ENCODE measurements at regions of chr14 and their contacts with region 1.

Region 1: DNA sequence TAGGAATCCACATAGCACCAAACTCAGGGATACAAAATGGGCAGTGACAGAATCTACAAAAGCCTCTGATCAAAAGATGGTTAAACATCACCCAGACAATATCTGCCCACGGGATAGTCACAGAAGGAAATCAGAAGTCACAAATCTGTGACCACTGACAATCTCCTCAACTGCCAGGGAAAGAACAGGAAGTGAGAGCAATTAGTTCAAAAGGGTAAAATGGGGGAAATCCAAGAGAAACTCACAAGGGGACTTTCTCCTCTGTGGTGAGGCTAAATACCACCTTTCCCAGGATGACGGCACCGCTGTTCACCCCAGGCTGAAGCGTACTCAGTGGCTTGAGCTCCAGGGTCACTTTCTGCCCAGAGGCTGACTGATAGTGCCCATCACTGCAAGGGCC is 10.7 kb downstream of the TTC5 start:
- DNase-seq: no peak
- H3K4me3 ChIP-seq: no peak overlapping the region
- H3K27ac ChIP-seq: no peak overlapping the region
- H3K4me1 ChIP-seq: no peaks in the 10 kb centered on the region
- H3K27me3 ChIP-seq: no peaks in the 10 kb centered on the region
- CTCF ChIP-seq: no peak
- EP300 ChIP-seq: no peak
- RAD21 ChIP-seq: no peak

Region 2: GRCh38 chr14:20305265-20306078 is 10.4 kb after region 1 on chr14 and contains the start of gene TTC5:
- CTCF ChIA-PET with region 1: interaction called, 11 read pairs
- POLR2A ChIA-PET with region 1: no interaction called
- DNase-seq: peak; percentile 87
- H3K4me3 ChIP-seq: peak within 1 kb of the TSS; percentile 63 to 83
- H3K27ac ChIP-seq: peak within 1 kb of the TSS in 1 of 2 experiments; percentile 20; a peak in 1 of 4 replicates
- H3K4me1 ChIP-seq: peaks cover 0 to 3% of the 10 kb centered on the region in 2 experiments; a peak in 2 of 4 replicates
- H3K27me3 ChIP-seq: no peaks in the 10 kb centered on the region
- CTCF ChIP-seq: peak; percentile 95
- EP300 ChIP-seq: no peak; a peak in 1 of 4 replicates
- RAD21 ChIP-seq: peak; percentile 34; the same call in 1 of the 2 replicates
- polyA plus RNA-seq, gene TTC5: 14.6 and 15.7 TPM in 2 replicates